Activated naive CD8-positive, alpha-beta T cell treated with anti-CD3 and anti-CD28 coated beads, Interleukin-2, amount 10 ng/mL, durations not matched to agents 7 days and 5 days (primary cell): ENCODE measurements at regions of chrX and their contacts with region 1.

Region 1: GRCh38 chrX:119791438-119792231 is at the start of gene RPL39:
- DNase-seq: peak; percentile 75
- ATAC-seq: peak; percentile 94
- H3K4me3 Mint-ChIP-seq: peak within 1 kb of the TSS; percentile 95
- H3K27ac Mint-ChIP-seq: peak within 1 kb of the TSS; percentile 94
- H3K4me1 Mint-ChIP-seq: peaks cover 11% of the 10 kb centered on the region
- H3K27me3 Mint-ChIP-seq: no peaks in the 10 kb centered on the region
- total RNA-seq, gene RPL39: 2,169 to 2,323 TPM

Region 2: DNA sequence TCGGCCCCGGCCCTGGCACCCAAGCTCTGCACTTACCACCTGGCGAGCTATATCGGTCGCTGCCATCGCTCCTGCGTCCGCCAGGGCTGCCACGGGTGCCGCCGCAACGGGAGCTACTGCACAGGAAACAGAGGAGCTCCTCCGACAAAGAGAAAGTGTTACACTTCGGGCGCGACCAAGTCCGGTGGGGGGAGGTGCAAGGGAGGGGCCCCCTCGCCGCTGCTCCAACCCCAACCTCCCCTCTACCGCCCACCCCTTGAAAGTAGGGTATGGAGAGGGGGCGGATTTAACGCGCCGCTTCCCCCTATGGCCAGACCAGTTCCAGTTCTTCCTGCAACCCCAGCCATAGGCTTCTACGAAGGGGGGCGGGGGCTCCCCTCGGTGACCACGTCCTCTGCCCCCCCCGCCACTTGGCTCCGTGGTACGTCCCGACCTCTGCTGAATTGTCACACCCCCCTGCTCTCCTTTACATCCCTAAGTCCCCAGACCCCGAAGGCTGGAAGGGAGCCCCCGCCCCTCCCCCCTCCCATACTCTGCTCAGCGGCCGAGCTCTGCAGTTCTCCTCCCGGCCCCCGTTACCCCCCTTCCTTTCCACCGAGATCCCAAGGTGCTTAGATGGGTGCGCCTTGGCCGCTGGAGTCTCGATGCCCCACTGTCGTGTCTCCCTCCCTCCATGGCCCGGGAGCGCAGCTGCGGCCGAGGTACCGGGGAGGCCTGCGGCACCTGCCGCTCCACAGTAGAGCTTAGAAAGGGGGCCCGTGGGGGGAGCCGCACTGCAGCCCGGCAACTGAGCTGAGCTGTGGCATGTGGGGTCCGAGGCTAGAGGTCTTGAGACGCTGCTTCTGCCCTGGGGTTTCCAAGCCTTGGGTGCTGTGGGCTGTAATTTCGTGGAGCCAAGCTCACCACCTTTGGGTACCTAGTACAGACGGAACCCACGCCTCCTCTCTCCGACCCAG is 98.3 kb before region 1 on chrX and contains the start of gene SEPTIN6:
- POLR2A ChIA-PET with region 1: interaction called, 10 read pairs
- DNase-seq: peak; percentile 85
- ATAC-seq: peak; percentile 70
- H3K4me3 Mint-ChIP-seq: peak within 1 kb of the TSS; percentile 98
- H3K27ac Mint-ChIP-seq: peak within 1 kb of the TSS; percentile 98
- H3K4me1 Mint-ChIP-seq: peaks cover 17% of the 10 kb centered on the region
- H3K27me3 Mint-ChIP-seq: no peaks in the 10 kb centered on the region
- total RNA-seq, gene SEPTIN6: 257 to 274 TPM

Region 3: DNA sequence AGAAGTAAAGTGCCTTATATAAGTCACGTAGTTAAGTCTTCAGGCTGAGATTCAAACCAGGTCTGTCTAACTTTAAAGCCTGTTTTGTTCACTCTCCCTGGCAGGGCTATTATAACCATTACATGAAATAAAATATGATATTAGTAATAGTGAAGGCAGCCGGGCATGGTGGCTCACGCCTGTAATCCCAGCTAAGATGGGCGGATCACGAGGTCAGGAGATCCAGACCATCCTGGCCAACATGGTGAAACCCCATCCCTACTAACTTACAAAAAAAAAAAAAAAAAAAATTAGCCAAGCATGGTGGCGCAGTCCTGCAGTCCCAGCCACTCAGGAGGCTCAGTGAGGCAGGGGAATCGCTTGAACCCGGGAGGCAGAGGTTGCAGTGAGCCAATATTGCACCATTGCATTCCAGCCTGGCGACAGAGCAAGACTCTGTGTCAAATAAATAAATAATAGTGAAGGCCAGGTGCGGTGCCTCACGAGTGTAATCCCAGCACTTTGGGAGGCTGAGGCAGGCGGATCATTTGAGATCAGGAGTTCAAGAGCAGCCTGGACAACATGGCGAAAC is 55.3 kb before region 1 on chrX:
- POLR2A ChIA-PET with region 1: no interaction called
- DNase-seq: no peak
- ATAC-seq: no peak
- H3K4me3 Mint-ChIP-seq: no peak overlapping the region
- H3K27ac Mint-ChIP-seq: no peak overlapping the region
- H3K4me1 Mint-ChIP-seq: peaks cover 6% of the 10 kb centered on the region
- H3K27me3 Mint-ChIP-seq: no peaks in the 10 kb centered on the region

Region 4: DNA sequence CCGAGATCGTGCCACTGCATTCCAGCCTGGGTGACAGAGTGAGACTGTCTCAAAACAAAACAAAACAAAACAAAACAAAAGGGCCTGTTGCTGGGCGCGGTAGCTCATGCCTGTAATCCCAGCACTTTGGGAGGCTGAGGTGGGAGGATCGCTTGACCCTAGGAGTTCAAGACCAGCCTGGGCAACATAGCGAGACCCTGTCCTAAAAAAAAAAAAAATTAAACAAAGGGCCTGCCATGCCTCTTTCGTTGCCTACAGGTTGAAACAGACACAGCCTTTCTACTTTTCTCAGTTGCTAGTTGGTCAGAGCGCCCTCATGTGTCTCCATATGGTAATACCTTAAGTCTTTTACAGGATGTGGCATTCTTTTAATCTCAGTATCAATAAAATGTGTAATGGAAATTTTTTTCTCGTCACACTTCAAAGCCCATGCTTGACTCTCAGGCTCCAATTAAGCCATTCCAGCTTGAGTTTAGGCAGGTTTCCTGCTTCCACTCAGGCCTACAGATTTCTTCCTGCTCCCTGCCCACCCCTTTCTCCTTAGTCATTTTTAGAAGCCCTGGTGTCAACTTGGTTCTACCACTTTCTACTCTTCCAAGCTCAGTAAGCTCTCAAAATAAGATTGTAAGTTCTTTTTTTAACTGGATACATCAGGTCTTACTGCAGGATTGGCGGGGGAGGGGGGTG is 37.9 kb before region 1 on chrX:
- POLR2A ChIA-PET with region 1: interaction called, 17 read pairs
- DNase-seq: no peak
- ATAC-seq: peak; percentile 28
- H3K4me3 Mint-ChIP-seq: peak overlapping the region; percentile 40
- H3K27ac Mint-ChIP-seq: peak overlapping the region; percentile 91
- H3K4me1 Mint-ChIP-seq: peaks cover 38% of the 10 kb centered on the region
- H3K27me3 Mint-ChIP-seq: no peaks in the 10 kb centered on the region

Region 5: GRCh38 chrX:119826399-119826959 is 34.8 kb after region 1 on chrX:
- POLR2A ChIA-PET with region 1: interaction called, 13 read pairs
- DNase-seq: no peak
- ATAC-seq: peak; percentile 28
- H3K4me3 Mint-ChIP-seq: no peak overlapping the region
- H3K27ac Mint-ChIP-seq: peak overlapping the region; percentile 16
- H3K4me1 Mint-ChIP-seq: peaks cover 5% of the 10 kb centered on the region
- H3K27me3 Mint-ChIP-seq: no peaks in the 10 kb centered on the region

Region 6: GRCh38 chrX:119852382-119853353 is 61.0 kb after region 1 on chrX and contains the start of gene UPF3B:
- POLR2A ChIA-PET with region 1: interaction called, 12 read pairs
- DNase-seq: peak; percentile 85
- ATAC-seq: peak; percentile 96
- H3K4me3 Mint-ChIP-seq: peak within 1 kb of the TSS; percentile 97
- H3K27ac Mint-ChIP-seq: peak within 1 kb of the TSS; percentile 92
- H3K4me1 Mint-ChIP-seq: peaks cover 5% of the 10 kb centered on the region
- H3K27me3 Mint-ChIP-seq: no peaks in the 10 kb centered on the region
- total RNA-seq, gene UPF3B: 11.1 to 11.3 TPM

Region 7: DNA sequence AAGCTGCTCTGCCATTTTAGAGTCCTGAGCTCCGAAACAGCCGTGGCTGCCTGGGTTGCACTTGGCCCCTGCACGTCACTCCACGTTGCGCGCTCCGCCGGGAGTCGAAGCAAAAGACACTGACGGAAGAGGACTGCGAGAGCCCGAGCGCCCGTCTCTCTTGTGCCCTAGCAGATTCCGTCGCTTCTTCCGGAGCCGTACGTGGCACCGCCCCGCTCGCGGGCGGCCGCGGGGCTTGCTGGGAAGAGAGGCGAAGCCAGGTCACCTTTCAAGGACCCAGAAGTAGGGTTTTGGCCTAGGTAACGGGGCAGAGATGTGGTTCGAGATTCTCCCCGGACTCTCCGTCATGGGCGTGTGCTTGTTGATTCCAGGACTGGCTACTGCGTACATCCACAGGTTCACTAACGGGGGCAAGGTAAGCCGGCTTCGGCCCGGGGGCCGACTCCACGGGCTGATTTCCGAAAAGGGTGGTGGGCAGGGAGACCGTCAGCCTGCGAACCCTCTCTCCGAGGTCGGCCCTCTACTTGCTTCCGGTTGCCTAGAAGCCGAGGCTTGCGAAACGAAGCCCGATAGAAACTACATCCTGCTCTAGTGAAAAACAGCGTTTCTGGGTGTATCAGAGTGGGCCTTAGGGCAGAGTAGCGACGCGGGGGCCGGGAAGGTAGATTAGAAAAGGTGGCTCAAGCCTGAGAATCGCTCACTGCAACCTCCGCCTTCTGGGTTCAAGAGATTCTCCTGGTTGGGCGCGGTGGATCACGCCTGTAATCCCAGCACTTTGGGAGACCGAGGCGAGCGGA is 80.2 kb after region 1 on chrX and contains the starts of genes NDUFA1 and RNF113A:
- POLR2A ChIA-PET with region 1: interaction called, 25 read pairs
- DNase-seq: peak; percentile 85
- ATAC-seq: peak; percentile 90
- H3K4me3 Mint-ChIP-seq: peak within 1 kb of the TSS; percentile 98
- H3K27ac Mint-ChIP-seq: peak within 1 kb of the TSS; percentile 100
- H3K4me1 Mint-ChIP-seq: peaks cover 8% of the 10 kb centered on the region
- H3K27me3 Mint-ChIP-seq: no peaks in the 10 kb centered on the region
- total RNA-seq, gene NDUFA1: 93.1 to 98.1 TPM
- total RNA-seq, gene RNF113A: 36.7 to 37.5 TPM

Region 8: GRCh38 chrX:119887721-119888425 is 96.2 kb after region 1 on chrX:
- POLR2A ChIA-PET with region 1: interaction called, 12 read pairs
- DNase-seq: peak; percentile 64
- ATAC-seq: peak; percentile 61
- H3K4me3 Mint-ChIP-seq: peak overlapping the region; percentile 52
- H3K27ac Mint-ChIP-seq: no peak overlapping the region
- H3K4me1 Mint-ChIP-seq: peaks cover 6% of the 10 kb centered on the region
- H3K27me3 Mint-ChIP-seq: no peaks in the 10 kb centered on the region

Region 9: GRCh38 chrX:120029354-120029753 is 237.7 kb after region 1 on chrX:
- POLR2A ChIA-PET with region 1: no interaction called
- DNase-seq: no peak
- ATAC-seq: no peak
- H3K4me3 Mint-ChIP-seq: no peak overlapping the region
- H3K27ac Mint-ChIP-seq: no peak overlapping the region
- H3K4me1 Mint-ChIP-seq: no peaks in the 10 kb centered on the region
- H3K27me3 Mint-ChIP-seq: peaks cover 20% of the 10 kb centered on the region